Ascending aorta (tissue), 2 donors: ENCODE measurements at regions of chr1 and their contacts with region 1.

Region 1: DNA sequence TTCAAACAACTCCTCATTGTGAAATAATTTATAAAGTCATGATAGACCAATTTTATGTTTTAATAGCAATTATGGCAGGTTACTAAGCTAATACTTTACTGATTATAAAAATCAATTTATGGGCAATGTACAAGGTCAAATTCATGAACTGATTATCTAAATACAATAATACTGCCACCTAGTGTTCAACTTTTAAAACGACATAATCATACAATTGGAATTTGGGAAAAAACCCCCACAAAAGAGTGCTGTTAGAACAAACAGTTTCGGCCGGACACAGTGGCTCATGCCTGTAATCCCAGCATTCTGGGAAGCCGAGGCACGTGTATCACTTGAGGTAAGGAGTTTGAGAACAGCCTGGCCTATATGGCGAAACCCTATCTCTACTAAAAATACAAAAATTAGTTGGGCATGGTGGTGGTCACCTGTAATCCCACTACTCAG is 14.0 kb downstream of the GTF2B start:
- DNase-seq: no peak
- H3K4me3 ChIP-seq: no peak overlapping the region
- H3K27ac ChIP-seq: peak overlapping the region in 1 of 2 donors; percentile 43
- H3K4me1 ChIP-seq: peaks cover 0 to 9% of the 10 kb centered on the region in 2 donors
- H3K27me3 ChIP-seq: no peaks in the 10 kb centered on the region
- CTCF ChIP-seq: peak; percentile 7 to 59 (median 53)

Region 2: GRCh38 chr1:88655685-88656299 is 221.6 kb before region 1 on chr1:
- intact Hi-C with region 1: loop called (anchors 2 kb)
- DNase-seq: no peak
- H3K4me3 ChIP-seq: no peak overlapping the region
- H3K27ac ChIP-seq: no peak overlapping the region
- H3K4me1 ChIP-seq: no peaks in the 10 kb centered on the region
- H3K27me3 ChIP-seq: no peaks in the 10 kb centered on the region
- CTCF ChIP-seq: peak; percentile 35 to 59 (median 57)

Region 3: DNA sequence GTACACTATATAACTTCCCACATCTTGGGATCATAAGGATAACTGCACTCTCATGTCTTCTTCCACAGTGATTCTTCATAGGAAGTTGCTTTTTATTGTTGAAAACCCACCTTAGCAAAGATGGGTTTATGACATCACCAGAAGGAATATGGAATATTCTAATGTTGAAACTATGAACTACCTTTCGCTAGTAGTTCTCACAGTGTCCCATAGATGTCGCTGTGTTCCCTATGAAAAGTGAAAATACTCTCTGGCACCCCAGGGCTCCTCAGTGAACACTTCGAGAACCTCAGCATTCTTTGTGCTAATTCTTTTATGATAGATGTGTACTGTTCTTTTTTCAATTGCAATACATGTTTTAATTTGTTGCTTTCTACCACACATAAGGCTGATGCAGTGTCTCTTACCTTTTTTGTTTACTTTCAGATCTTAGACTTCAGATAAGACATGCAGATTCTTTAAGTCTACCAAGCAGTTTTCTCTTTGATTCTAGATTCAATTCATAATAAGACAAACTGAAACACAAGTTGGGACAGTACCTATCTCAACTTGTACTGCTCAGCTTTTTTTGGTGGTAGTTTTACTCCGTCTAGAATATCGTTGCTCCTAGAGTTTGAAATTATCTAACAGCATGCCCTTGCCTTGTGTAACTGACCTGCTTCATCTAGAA is 76.9 kb before region 1 on chr1:
- intact Hi-C with region 1: loop called (anchors 5 kb)
- DNase-seq: no peak
- H3K4me3 ChIP-seq: no peak overlapping the region
- H3K27ac ChIP-seq: no peak overlapping the region
- H3K4me1 ChIP-seq: no peaks in the 10 kb centered on the region
- H3K27me3 ChIP-seq: no peaks in the 10 kb centered on the region
- CTCF ChIP-seq: peak; percentile 6 to 38 (median 36)